ENCODE measurements at regions of chr1 and their contacts with region 1.

Region 1: DNA sequence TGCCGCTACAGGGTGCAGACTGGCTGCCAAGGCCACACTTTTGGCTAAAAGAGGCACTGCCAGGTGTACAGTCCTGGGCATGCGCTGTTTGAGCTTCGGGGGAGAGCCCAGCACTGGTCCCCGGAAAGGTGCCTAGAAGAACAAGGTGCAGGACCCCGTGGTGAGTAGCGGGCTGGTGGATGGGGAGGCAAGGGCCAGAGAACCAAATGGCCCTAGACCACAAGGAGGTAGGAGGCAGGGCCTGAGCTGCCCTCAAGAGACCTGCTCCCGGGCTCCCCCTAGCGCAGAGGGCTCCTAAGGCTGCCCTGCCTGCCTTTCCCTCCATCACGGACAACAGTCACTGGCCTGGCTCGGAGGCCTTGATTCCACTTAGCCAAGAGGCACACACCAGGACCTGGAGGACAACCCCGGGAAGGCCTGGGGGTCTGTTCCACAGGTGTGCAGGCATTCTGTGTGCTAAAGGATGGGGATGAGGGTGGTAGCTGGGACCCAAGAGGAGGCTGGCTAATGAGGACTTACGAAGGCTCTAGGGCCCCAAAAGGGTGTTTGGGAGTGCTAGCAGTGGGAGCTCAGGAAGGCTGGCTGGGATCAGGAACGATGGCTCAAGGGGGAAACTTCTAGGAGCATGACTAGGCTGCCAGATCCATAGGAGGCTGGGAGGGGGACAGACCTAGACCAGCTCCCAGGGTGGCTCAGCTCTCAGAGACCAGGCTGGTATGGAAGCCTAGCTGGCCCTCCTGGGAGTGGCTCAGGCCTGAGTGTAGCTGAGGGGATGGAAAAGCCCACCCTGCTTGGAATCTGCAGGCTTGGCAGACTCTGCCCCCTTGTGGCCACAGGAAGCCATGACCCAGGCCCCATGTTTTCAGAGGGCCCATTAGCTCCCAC is 742 bp downstream of the ARTN start:
- DNase-seq: peak; percentile 67 to 94
- H3K4me3 ChIP-seq: peak overlapping the region; percentile 57 to 67 (median 62)
- H3K27ac ChIP-seq: no peak overlapping the region
- H3K4me1 ChIP-seq: peaks cover 13 to 41% (median 35%) of the 10 kb centered on the region in 4 experiments
- H3K27me3 ChIP-seq: peaks cover 0 to 8% (median 4%) of the 10 kb centered on the region in 4 experiments; a peak in 5 of 7 replicates
- CTCF ChIP-seq: peak in 2 of 3 experiments; percentile 97 to 98; a peak in 3 of 4 replicates
- EP300 ChIP-seq: 0 out of 3 replicates have a peak, but pooled peaks of 1 of the 2 experiments have one; percentile 36
- POLR2A ChIP-seq: no peak
- RAD21 ChIP-seq: peak; percentile 92 to 97

Region 2: DNA sequence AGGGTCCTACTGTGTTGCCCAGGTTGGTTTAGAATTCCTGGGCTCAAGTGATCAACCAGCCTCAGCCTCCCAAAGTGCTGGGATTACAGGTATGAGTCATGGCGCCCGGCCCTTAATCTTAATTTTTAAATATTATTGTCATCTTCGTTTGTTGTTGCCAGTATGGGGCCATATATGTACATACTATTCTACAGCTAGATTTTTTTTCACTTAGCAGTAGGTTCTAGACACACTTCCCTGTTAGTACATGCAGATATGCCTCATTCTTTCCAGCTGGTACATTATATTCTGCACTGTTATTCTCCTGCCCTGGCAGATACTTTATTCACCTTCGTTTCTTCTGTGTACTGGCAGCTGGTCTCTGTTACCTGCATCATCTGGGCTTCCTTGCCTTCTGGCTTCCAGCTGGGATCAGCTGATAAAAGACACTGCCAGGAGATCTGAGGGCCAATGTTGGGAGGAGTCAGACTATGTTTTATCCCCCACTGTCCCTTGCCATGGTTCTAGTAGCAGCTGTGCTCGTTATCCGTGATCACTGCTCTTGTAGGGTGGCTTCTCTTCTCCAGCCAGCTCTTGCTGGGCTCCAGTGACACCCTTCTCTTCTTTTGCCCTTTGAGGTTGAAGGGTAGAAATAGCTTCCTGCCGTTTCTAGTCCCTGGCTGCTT is 202.3 kb before region 1 on chr1:
- CTCF ChIA-PET with region 1: interaction called, 15 read pairs
- POLR2A ChIA-PET with region 1: no interaction called
- DNase-seq: no peak
- H3K4me3 ChIP-seq: no peak overlapping the region
- H3K27ac ChIP-seq: no peak overlapping the region
- H3K4me1 ChIP-seq: no peaks in the 10 kb centered on the region
- H3K27me3 ChIP-seq: no peaks in the 10 kb centered on the region
- CTCF ChIP-seq: no peak
- EP300 ChIP-seq: no peak
- POLR2A ChIP-seq: no peak
- RAD21 ChIP-seq: no peak

Region 3: DNA sequence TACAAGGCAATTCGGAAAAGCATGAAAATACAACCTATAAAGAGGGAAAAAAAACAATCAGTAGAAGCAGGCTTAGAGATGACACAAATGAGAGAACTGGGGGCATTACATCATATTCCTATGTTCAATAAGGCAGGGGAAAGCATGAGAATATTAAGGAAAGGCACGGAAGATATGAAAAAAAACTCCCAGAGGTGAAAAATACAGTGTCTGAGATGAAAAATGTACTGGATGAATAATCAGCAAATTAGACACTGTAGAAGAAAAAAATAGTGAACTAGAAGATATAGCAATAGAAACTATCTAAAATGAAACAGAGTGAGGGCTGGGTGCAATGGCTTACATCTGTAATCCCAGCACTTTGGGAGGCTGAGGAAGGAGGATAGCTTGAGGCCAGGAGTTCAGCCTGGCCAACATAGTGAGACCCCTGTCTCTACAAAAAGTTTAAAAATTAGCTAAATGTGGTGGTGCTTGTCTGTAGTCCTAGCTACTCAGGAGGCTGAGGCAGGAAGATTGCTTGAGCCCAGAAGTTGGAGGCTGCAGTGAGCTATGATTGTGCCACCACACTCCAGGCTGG is 125.2 kb before region 1 on chr1:
- CTCF ChIA-PET with region 1: interaction called, 47 read pairs
- POLR2A ChIA-PET with region 1: no interaction called
- DNase-seq: no peak
- H3K4me3 ChIP-seq: no peak overlapping the region
- H3K27ac ChIP-seq: no peak overlapping the region
- H3K4me1 ChIP-seq: peaks cover 0 to 3% (median 2%) of the 10 kb centered on the region in 4 experiments; a peak in 4 of 7 replicates
- H3K27me3 ChIP-seq: no peaks in the 10 kb centered on the region
- CTCF ChIP-seq: no peak
- EP300 ChIP-seq: no peak
- POLR2A ChIP-seq: no peak
- RAD21 ChIP-seq: no peak

Region 4: GRCh38 chr1:43861337-43861736 is 73.0 kb before region 1 on chr1:
- CTCF ChIA-PET with region 1: interaction called, 16 read pairs
- POLR2A ChIA-PET with region 1: interaction called, 3 read pairs
- DNase-seq: no peak
- H3K4me3 ChIP-seq: no peak overlapping the region
- H3K27ac ChIP-seq: no peak overlapping the region
- H3K4me1 ChIP-seq: peaks cover 0 to 12% (median 6%) of the 10 kb centered on the region in 4 experiments; a peak in 6 of 7 replicates
- H3K27me3 ChIP-seq: no peaks in the 10 kb centered on the region
- CTCF ChIP-seq: no peak
- EP300 ChIP-seq: no peak
- POLR2A ChIP-seq: no peak
- RAD21 ChIP-seq: no peak

Region 5: DNA sequence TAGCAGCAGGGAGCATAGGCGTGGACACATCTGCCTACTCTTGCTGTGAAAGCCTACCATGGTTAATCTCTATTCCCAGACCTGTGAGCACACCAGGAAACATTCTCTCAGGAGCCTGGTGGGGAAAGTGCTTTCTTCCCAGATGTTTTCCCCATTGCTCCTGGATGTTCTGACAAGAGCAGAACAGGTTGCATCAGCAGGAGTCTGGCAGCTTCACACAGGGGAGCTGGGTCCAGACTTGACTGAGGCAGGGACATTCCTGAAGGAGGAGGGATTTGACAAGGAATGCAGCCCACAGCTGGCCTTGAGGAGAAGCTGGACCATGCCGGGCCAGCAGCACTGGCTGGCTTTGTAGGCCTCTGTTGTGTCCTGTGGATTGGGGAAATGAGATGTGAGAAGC is 21.7 kb before region 1 on chr1:
- CTCF ChIA-PET with region 1: interaction called, 126 read pairs
- POLR2A ChIA-PET with region 1: interaction called, 15 read pairs
- DNase-seq: no peak
- H3K4me3 ChIP-seq: no peak overlapping the region
- H3K27ac ChIP-seq: no peak overlapping the region
- H3K4me1 ChIP-seq: peaks cover 3 to 21% (median 7%) of the 10 kb centered on the region in 4 experiments
- H3K27me3 ChIP-seq: no peaks in the 10 kb centered on the region
- CTCF ChIP-seq: no peak
- EP300 ChIP-seq: 0 out of 3 replicates have a peak, but pooled peaks of 1 of the 2 experiments have one; percentile 34
- POLR2A ChIP-seq: no peak
- RAD21 ChIP-seq: no peak

Region 6: GRCh38 chr1:43991476-43992231 is 57.3 kb after region 1 on chr1 and contains the start of gene CCDC24:
- CTCF ChIA-PET with region 1: interaction called, 29 read pairs
- POLR2A ChIA-PET with region 1: interaction called, 6 read pairs
- DNase-seq: peak in 1 of 2 experiments; percentile 92
- H3K4me3 ChIP-seq: peak within 1 kb of the TSS; percentile 48 to 72 (median 64)
- H3K27ac ChIP-seq: no peak within 1 kb of the TSS
- H3K4me1 ChIP-seq: peaks cover 0 to 5% (median 4%) of the 10 kb centered on the region in 4 experiments; a peak in 5 of 7 replicates
- H3K27me3 ChIP-seq: no peaks in the 10 kb centered on the region
- CTCF ChIP-seq: no peak
- EP300 ChIP-seq: no peak; a peak in 1 of 3 replicates
- POLR2A ChIP-seq: peak; percentile 21 to 72
- RAD21 ChIP-seq: no peak
- total RNA-seq, gene CCDC24: 10.5 and 11.2 TPM in 2 replicates

Measured in H1 (cell line).